T-cell (primary cell): ENCODE measurements at regions of chr9 and their contacts with region 1.

Region 1: GRCh38 chr9:112086627-112087026 is 88.5 kb downstream of the SUSD1 start:
- DNase-seq: peak in 1 of 35 experiments; percentile 44
- ATAC-seq: no peak
- H3K4me3 ChIP-seq: no peak overlapping the region
- H3K4me3 Mint-ChIP-seq: no peak overlapping the region
- H3K27ac ChIP-seq: no peak overlapping the region
- H3K27ac Mint-ChIP-seq: no peak overlapping the region
- H3K4me1 ChIP-seq: no peaks in the 10 kb centered on the region
- H3K4me1 Mint-ChIP-seq: no peaks in the 10 kb centered on the region
- H3K27me3 ChIP-seq: no peaks in the 10 kb centered on the region
- H3K27me3 Mint-ChIP-seq: no peaks in the 10 kb centered on the region

Region 2: GRCh38 chr9:112097712-112098688 is 11.4 kb after region 1 on chr9:
- CTCF ChIA-PET with region 1: interaction called, 6 to 10 read pairs
- POLR2A ChIA-PET with region 1: no interaction called
- DNase-seq: peak; percentile 28 to 87 (median 55)
- ATAC-seq: peak; percentile 71 to 82 (median 79)
- H3K4me3 ChIP-seq: no peak overlapping the region
- H3K4me3 Mint-ChIP-seq: no peak overlapping the region
- H3K27ac ChIP-seq: no peak overlapping the region
- H3K27ac Mint-ChIP-seq: no peak overlapping the region
- H3K4me1 ChIP-seq: peaks cover 0 to 17% of the 10 kb centered on the region in 2 experiments
- H3K4me1 Mint-ChIP-seq: peaks cover 11 to 31% (median 23%) of the 10 kb centered on the region in 3 donors
- H3K27me3 ChIP-seq: no peaks in the 10 kb centered on the region
- H3K27me3 Mint-ChIP-seq: no peaks in the 10 kb centered on the region